Mammary epithelial cell (primary cell): ENCODE measurements at regions of chr21 and their contacts with region 1.

Region 1: GRCh38 chr21:22791986-22792560 is 1793.9 kb downstream of the NCAM2 start:
- DNase-seq: no peak
- H3K4me3 ChIP-seq: no peak overlapping the region
- H3K27ac ChIP-seq: no peak overlapping the region
- H3K4me1 ChIP-seq: no peaks in the 10 kb centered on the region
- H3K27me3 ChIP-seq: peaks cover 2% of the 10 kb centered on the region
- CTCF ChIP-seq: peak; percentile 54 to 62

Region 2: DNA sequence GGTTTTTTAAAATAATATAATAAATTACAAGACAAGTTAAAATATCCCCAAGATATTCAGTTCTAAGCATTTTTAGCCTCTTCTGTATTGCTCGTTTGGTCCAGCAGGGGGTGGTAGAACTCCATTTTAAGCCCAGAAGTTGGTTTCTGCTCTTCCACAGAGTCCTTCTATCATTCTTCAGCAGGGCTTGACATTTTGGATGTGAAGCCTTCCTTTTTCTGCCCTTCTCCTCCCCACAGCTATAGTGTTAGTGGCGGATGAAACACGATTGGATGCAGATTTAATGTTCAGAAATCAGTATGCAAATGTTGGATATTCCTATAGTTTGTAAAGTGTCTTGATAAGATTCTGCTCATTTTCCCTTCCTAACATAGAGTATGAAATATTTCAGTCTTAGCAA is 1792.4 kb before region 1 on chr21:
- CTCF ChIA-PET with region 1: no interaction called
- dilution Hi-C with region 1: no loop called
- in situ Hi-C with region 1: loop called in 1 of 2 experiments (anchors 25 kb)
- intact Hi-C with region 1: loop called (anchors 5 kb)
- DNase-seq: peak; percentile 9
- H3K4me3 ChIP-seq: no peak overlapping the region
- H3K27ac ChIP-seq: no peak overlapping the region
- H3K4me1 ChIP-seq: no peaks in the 10 kb centered on the region
- H3K27me3 ChIP-seq: peaks cover 7% of the 10 kb centered on the region
- CTCF ChIP-seq: peak; percentile 38 to 61

Region 3: GRCh38 chr21:21163904-21164303 is 1628.2 kb before region 1 on chr21:
- CTCF ChIA-PET with region 1: no interaction called
- dilution Hi-C with region 1: no loop called
- in situ Hi-C with region 1: loop called in 1 of 2 experiments (anchors 10 kb)
- intact Hi-C with region 1: no loop called
- DNase-seq: peak; percentile 2
- H3K4me3 ChIP-seq: no peak overlapping the region
- H3K27ac ChIP-seq: no peak overlapping the region
- H3K4me1 ChIP-seq: no peaks in the 10 kb centered on the region
- H3K27me3 ChIP-seq: no peaks in the 10 kb centered on the region
- CTCF ChIP-seq: peak; percentile 30 to 40